ENCODE measurements at regions of chr2 and their contacts with region 1.

Region 1: DNA sequence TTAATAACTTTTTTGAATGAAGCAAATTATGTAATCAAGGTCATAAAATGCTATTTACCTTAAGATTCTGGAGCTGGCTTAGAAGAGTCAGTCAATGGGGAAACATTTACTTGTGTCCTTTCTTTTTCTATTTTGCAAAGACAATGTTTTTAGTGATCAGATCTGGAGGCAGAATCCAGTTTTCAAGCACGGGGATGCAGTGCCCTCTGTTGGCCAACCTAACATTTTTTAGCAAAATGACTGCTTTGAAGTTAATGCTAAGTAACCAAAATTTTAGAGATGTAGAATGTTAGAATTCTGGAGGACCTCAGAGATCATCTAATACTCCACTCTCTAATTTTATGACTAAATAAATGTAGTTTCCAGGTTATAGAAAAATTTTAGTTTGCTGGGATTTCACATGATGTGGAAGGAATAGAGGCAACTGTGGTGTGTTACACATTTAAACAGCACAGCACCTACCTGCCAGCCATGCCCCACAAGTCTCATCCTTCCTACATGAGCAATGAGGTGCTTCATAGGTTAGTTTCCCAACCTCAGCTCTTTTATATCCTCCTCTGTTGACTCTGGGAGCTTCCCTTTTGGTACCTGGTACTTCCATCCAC is 23.6 kb upstream of the SLC9A4 start:
- DNase-seq: no peak
- ATAC-seq: peak; percentile 78
- H3K4me3 ChIP-seq: no peak overlapping the region
- H3K27ac ChIP-seq: no peak overlapping the region
- H3K4me1 ChIP-seq: no peaks in the 10 kb centered on the region
- H3K27me3 ChIP-seq: no peaks in the 10 kb centered on the region
- CTCF ChIP-seq: peak; percentile 49 to 79 (median 58); a peak in 5 of 6 replicates
- EP300 ChIP-seq: no peak
- POLR2A ChIP-seq: no peak
- RAD21 ChIP-seq: peak; percentile 87

Region 2: DNA sequence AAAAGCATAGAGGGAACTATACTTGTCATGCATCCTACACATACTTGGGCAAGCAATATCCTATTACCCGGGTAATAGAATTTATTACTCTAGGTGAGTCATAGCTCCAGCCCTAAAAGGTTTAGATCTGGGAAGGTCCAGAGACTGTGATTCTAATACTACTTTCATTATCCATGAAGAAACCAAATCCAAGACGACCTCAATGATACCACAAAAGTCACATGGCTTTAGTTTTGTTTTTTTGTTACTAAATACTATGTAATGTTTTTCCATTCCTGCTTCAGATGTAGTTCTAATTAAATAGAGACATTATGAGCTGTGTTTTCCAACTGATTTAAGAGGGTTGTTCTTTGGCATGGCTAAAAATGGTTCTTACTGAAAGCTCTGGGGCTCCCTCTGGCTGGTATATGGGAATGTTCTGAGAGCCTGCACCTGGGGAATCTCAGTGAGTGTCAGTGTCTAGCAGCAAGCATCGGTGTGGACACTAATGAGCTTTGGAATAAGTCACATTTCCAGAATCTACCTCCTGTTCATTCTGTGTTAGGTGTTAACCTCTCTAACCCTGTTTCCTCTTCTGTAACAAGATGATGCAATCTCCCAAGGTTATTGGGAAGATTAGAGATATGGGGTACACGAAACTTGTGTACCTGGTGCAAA is 283.2 kb before region 1 on chr2:
- CTCF ChIA-PET with region 1: no interaction called
- POLR2A ChIA-PET with region 1: no interaction called
- RAD21 ChIA-PET with region 1: no interaction called
- SMC1A ChIA-PET with region 1: no interaction called
- in situ Hi-C with region 1: no loop called
- intact Hi-C with region 1: no loop called
- DNase-seq: no peak
- ATAC-seq: no peak
- H3K4me3 ChIP-seq: no peak overlapping the region
- H3K27ac ChIP-seq: no peak overlapping the region
- H3K4me1 ChIP-seq: no peaks in the 10 kb centered on the region
- H3K27me3 ChIP-seq: no peaks in the 10 kb centered on the region
- CTCF ChIP-seq: peak in 1 of 3 experiments; percentile 37; a peak in 2 of 6 replicates
- EP300 ChIP-seq: no peak
- POLR2A ChIP-seq: no peak
- RAD21 ChIP-seq: 0 out of 2 replicates have a peak, but pooled peaks have one; percentile 11

Region 3: GRCh38 chr2:102355526-102356380 is 93.7 kb before region 1 on chr2 and contains the start of gene IL18R1:
- CTCF ChIA-PET with region 1: interaction called, 58 read pairs
- POLR2A ChIA-PET with region 1: interaction called, 3 read pairs
- RAD21 ChIA-PET with region 1: interaction called, 4 read pairs
- SMC1A ChIA-PET with region 1: interaction called, 42 read pairs
- in situ Hi-C with region 1: no loop called
- intact Hi-C with region 1: no loop called
- DNase-seq: peak; percentile 42
- ATAC-seq: peak; percentile 88
- H3K4me3 ChIP-seq: peak within 1 kb of the TSS; percentile 96
- H3K27ac ChIP-seq: peak within 1 kb of the TSS; percentile 91
- H3K4me1 ChIP-seq: peaks cover 4% of the 10 kb centered on the region
- H3K27me3 ChIP-seq: no peaks in the 10 kb centered on the region
- CTCF ChIP-seq: peak; percentile 72 to 91 (median 82)
- EP300 ChIP-seq: no peak
- POLR2A ChIP-seq: no peak
- RAD21 ChIP-seq: peak; percentile 76
- polyA plus RNA-seq, gene IL18R1: 3.5 to 3.8 TPM

Region 4: DNA sequence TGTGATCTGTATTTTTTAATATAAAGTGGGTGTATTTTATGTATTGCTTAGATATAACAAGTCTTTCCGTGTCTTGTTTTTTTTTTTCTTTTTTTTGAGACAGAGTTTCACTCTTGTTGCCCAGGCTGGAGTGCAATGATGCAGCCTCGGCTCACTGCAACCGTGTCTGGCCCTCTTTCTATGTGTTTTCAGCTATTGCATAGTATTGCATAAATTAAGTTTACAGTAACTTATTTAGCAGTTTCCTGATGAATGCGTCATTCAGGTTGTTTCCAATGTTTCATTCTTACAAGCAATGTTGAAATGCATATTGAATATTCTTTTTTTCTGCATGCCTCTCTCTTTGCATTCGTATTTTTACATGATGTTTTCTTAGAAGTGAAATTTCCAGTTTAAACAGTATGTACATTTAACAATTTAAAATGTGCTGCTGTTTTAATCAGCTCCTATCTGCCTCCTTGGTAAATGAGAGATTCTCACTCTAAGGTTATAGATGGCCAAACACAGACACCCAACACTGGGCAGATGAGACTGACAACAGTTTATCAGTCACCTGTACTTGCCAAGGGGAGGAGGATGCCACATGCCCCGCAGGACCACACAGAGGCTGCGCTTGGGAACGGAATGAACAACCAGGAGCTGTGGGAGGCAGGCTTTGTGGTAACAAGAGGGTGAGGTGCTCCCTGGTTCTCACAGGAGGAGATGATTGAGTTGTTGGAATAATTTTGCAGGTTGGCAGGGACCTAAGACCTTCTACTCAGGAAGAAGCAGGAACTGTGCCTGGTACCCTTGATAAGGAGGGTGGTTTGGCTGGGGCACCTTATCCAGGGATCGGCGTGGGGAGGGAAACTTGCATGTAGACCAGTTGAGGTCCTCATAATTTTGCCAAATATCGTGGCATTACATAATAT is 31.1 kb after region 1 on chr2:
- CTCF ChIA-PET with region 1: no interaction called
- POLR2A ChIA-PET with region 1: no interaction called
- RAD21 ChIA-PET with region 1: no interaction called
- SMC1A ChIA-PET with region 1: no interaction called
- in situ Hi-C with region 1: no loop called
- intact Hi-C with region 1: no loop called
- DNase-seq: no peak
- ATAC-seq: no peak
- H3K4me3 ChIP-seq: no peak overlapping the region
- H3K27ac ChIP-seq: no peak overlapping the region
- H3K4me1 ChIP-seq: no peaks in the 10 kb centered on the region
- H3K27me3 ChIP-seq: no peaks in the 10 kb centered on the region; a peak in 2 of 4 replicates
- CTCF ChIP-seq: no peak
- EP300 ChIP-seq: no peak
- POLR2A ChIP-seq: no peak
- RAD21 ChIP-seq: no peak

Region 5: GRCh38 chr2:102667072-102667471 is 217.6 kb after region 1 on chr2:
- CTCF ChIA-PET with region 1: no interaction called
- POLR2A ChIA-PET with region 1: no interaction called
- RAD21 ChIA-PET with region 1: no interaction called
- SMC1A ChIA-PET with region 1: no interaction called
- in situ Hi-C with region 1: no loop called
- intact Hi-C with region 1: no loop called
- DNase-seq: no peak
- ATAC-seq: peak; percentile 42
- H3K4me3 ChIP-seq: no peak overlapping the region
- H3K27ac ChIP-seq: no peak overlapping the region
- H3K4me1 ChIP-seq: no peaks in the 10 kb centered on the region
- H3K27me3 ChIP-seq: no peaks in the 10 kb centered on the region; a peak in 1 of 4 replicates
- CTCF ChIP-seq: no peak
- EP300 ChIP-seq: no peak
- POLR2A ChIP-seq: no peak
- RAD21 ChIP-seq: no peak